GM12878 (cell line): ENCODE measurements at regions of chr12 and their contacts with region 1.

Region 1: GRCh38 chr12:121536899-121537813 is 43.7 kb downstream of the KDM2B start:
- DNase-seq: peak; percentile 82
- ATAC-seq: peak; percentile 81
- H3K4me3 ChIP-seq: peak overlapping the region; percentile 78
- H3K27ac ChIP-seq: peak overlapping the region; percentile 95
- H3K4me1 ChIP-seq: peaks cover 27% of the 10 kb centered on the region
- H3K27me3 ChIP-seq: no peaks in the 10 kb centered on the region
- CTCF ChIP-seq: no peak
- EP300 ChIP-seq: peak in 1 of 2 experiments; percentile 42; a peak in 2 of 4 replicates
- POLR2A ChIP-seq: peak; percentile 91
- RAD21 ChIP-seq: no peak

Region 2: GRCh38 chr12:121443193-121443870 is 93.8 kb before region 1 on chr12:
- CTCF ChIA-PET with region 1: no interaction called
- POLR2A ChIA-PET with region 1: no interaction called
- RAD21 ChIA-PET with region 1: no interaction called
- SMC1A ChIA-PET with region 1: no interaction called
- in situ Hi-C with region 1: no loop called
- intact Hi-C with region 1: no loop called
- DNase-seq: no peak
- ATAC-seq: peak; percentile 95
- H3K4me3 ChIP-seq: no peak overlapping the region
- H3K27ac ChIP-seq: no peak overlapping the region
- H3K4me1 ChIP-seq: no peaks in the 10 kb centered on the region
- H3K27me3 ChIP-seq: no peaks in the 10 kb centered on the region
- CTCF ChIP-seq: peak; percentile 76 to 92 (median 84)
- EP300 ChIP-seq: no peak
- POLR2A ChIP-seq: no peak
- RAD21 ChIP-seq: peak; percentile 76

Region 3: GRCh38 chr12:121499929-121500793 is 37.0 kb before region 1 on chr12:
- CTCF ChIA-PET with region 1: interaction called, 9 read pairs
- POLR2A ChIA-PET with region 1: interaction called, 7 read pairs
- RAD21 ChIA-PET with region 1: interaction called, 5 read pairs
- SMC1A ChIA-PET with region 1: interaction called, 5 read pairs
- in situ Hi-C with region 1: no loop called
- intact Hi-C with region 1: loop called (anchors 5 kb)
- DNase-seq: no peak
- ATAC-seq: peak; percentile 94
- H3K4me3 ChIP-seq: no peak overlapping the region
- H3K27ac ChIP-seq: no peak overlapping the region
- H3K4me1 ChIP-seq: no peaks in the 10 kb centered on the region
- H3K27me3 ChIP-seq: no peaks in the 10 kb centered on the region
- CTCF ChIP-seq: peak; percentile 85 to 96 (median 91)
- EP300 ChIP-seq: no peak
- POLR2A ChIP-seq: no peak
- RAD21 ChIP-seq: peak; percentile 92

Region 4: GRCh38 chr12:121513464-121514183 is 23.5 kb before region 1 on chr12:
- CTCF ChIA-PET with region 1: interaction called, 3 read pairs
- POLR2A ChIA-PET with region 1: interaction called, 5 read pairs
- RAD21 ChIA-PET with region 1: interaction called, 9 read pairs
- SMC1A ChIA-PET with region 1: interaction called, 11 read pairs
- in situ Hi-C with region 1: no loop called
- intact Hi-C with region 1: no loop called
- DNase-seq: no peak
- ATAC-seq: peak; percentile 97
- H3K4me3 ChIP-seq: no peak overlapping the region
- H3K27ac ChIP-seq: peak overlapping the region; percentile 36
- H3K4me1 ChIP-seq: peaks cover 11% of the 10 kb centered on the region
- H3K27me3 ChIP-seq: no peaks in the 10 kb centered on the region
- CTCF ChIP-seq: no peak
- EP300 ChIP-seq: no peak
- POLR2A ChIP-seq: no peak
- RAD21 ChIP-seq: no peak

Region 5: DNA sequence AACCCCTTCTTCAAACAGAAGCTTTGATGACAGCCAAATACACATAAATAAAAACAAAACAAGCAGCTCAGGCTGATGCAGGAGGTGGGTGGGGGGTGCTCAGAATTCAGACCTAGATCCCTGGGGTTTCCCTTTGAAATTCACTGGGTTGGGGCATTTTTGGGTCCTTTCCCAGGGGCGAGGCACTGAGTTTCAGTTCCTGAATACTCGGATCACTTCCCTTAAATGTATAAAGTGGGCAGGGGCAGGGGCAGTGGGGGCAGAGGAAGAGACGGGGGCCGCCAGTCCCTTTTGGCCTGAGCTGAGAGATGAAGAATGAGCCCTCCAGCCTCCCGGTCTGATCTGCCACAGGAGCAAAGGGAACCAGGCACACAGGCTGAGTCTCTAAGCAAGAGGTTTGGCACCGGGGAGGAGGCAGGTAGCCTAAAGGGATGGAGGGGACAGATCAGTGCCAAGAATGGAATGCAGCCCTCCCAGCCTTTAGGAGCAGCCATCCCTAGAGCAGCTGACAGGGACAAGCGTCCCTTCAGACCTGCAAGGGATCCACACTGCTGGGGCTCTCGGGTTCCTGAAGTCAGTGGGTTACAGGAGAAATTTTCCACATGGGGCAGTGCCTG is 23.3 kb after region 1 on chr12:
- CTCF ChIA-PET with region 1: no interaction called
- POLR2A ChIA-PET with region 1: interaction called, 3 read pairs
- RAD21 ChIA-PET with region 1: interaction called, 13 read pairs
- SMC1A ChIA-PET with region 1: no interaction called
- in situ Hi-C with region 1: no loop called
- intact Hi-C with region 1: no loop called
- DNase-seq: peak; percentile 63
- ATAC-seq: peak; percentile 89
- H3K4me3 ChIP-seq: no peak overlapping the region
- H3K27ac ChIP-seq: peak overlapping the region; percentile 65
- H3K4me1 ChIP-seq: peaks cover 31% of the 10 kb centered on the region
- H3K27me3 ChIP-seq: no peaks in the 10 kb centered on the region
- CTCF ChIP-seq: no peak
- EP300 ChIP-seq: peak; percentile 79 to 89; a peak in 3 of 4 replicates
- POLR2A ChIP-seq: no peak
- RAD21 ChIP-seq: no peak

Region 6: DNA sequence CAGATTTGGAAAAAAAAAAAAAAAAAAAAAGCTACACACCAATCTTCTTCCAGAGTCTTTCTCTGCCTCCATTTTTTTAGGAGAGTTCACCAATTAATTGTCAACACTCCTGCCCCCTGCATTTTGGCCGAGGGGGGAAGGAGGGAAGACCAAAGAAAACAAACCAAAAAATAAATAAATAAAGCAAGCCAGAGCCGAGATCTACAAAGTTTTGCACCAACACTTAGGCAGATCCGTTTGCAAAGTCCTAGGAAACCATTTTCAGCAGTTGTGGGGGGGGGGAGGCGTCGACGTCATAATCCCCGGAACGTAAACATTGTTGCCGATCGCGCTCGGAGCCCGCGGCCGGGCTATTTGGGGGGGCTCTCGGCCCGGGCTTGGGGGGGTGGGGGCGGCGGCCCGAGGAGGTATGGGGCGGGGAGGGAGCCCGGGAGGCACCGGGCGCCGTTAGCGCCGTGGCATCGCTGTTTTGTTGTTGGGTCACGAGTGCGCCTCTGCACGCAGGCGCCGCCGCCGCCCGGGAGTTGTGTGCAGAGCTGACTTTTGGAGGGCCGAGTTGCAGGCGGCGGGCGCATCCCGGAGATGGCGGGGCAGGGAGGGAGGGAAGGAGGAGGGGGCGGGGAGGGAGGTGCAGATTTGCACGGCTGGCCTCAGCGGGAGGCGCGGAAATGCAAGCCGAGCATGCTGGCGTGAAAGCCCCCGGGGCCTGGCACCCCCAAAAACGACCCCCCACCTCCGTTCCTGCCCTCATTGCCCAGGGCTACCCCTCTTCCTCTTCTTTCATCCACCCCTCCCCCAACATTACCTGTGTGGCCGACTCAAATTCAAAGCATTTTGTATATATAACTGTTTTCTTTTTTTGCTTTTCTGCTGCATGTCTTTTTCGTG is 43.1 kb after region 1 on chr12:
- CTCF ChIA-PET with region 1: interaction called, 6 read pairs
- POLR2A ChIA-PET with region 1: interaction called, 87 read pairs
- RAD21 ChIA-PET with region 1: interaction called, 13 read pairs
- SMC1A ChIA-PET with region 1: interaction called, 40 read pairs
- in situ Hi-C with region 1: no loop called
- intact Hi-C with region 1: no loop called
- DNase-seq: no peak
- ATAC-seq: peak; percentile 67
- H3K4me3 ChIP-seq: peak overlapping the region; percentile 77
- H3K27ac ChIP-seq: peak overlapping the region; percentile 59
- H3K4me1 ChIP-seq: peaks cover 19% of the 10 kb centered on the region
- H3K27me3 ChIP-seq: no peaks in the 10 kb centered on the region
- CTCF ChIP-seq: no peak
- EP300 ChIP-seq: no peak
- POLR2A ChIP-seq: peak; percentile 69
- RAD21 ChIP-seq: no peak

Region 7: DNA sequence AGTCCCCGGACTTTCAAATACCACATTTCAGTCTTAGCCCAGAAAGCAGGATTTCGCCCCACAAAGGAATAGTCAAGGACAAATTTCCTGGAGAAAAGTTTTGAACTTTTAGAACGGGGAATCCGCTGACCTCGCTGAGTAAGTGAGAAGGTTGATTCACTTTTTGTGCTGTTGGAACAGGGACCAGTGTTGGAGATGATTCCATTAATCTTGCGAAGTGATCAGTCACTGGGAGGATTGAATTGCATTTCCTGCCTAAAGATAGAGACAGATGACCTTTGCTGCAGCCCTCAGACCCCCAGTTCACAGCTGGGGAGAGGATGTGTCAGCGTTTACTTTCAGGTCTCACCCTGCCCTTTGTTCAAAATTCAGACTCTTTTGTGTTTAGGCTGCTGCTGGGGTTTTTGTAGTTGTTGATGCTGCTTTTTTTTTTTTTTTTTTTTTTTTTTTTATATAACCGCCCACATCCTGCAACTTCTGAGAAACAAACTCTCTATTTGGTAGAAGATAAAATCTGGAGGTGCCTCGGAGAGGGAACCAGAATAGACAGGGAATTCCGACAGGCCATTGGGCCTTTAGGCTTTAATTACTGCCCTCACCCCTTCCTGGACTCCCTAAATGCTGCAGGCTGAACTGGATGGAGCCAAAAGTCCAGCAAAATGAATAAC is 53.5 kb after region 1 on chr12:
- CTCF ChIA-PET with region 1: interaction called, 4 read pairs
- POLR2A ChIA-PET with region 1: interaction called, 5 read pairs
- RAD21 ChIA-PET with region 1: interaction called, 3 read pairs
- SMC1A ChIA-PET with region 1: interaction called, 3 read pairs
- in situ Hi-C with region 1: no loop called
- intact Hi-C with region 1: loop called (anchors 2 kb)
- DNase-seq: peak; percentile 74
- ATAC-seq: peak; percentile 91
- H3K4me3 ChIP-seq: peak overlapping the region; percentile 61
- H3K27ac ChIP-seq: peak overlapping the region; percentile 82
- H3K4me1 ChIP-seq: peaks cover 10% of the 10 kb centered on the region
- H3K27me3 ChIP-seq: no peaks in the 10 kb centered on the region
- CTCF ChIP-seq: no peak
- EP300 ChIP-seq: peak in 1 of 2 experiments; percentile 62; a peak in 1 of 4 replicates
- POLR2A ChIP-seq: peak; percentile 63
- RAD21 ChIP-seq: no peak

Region 8: DNA sequence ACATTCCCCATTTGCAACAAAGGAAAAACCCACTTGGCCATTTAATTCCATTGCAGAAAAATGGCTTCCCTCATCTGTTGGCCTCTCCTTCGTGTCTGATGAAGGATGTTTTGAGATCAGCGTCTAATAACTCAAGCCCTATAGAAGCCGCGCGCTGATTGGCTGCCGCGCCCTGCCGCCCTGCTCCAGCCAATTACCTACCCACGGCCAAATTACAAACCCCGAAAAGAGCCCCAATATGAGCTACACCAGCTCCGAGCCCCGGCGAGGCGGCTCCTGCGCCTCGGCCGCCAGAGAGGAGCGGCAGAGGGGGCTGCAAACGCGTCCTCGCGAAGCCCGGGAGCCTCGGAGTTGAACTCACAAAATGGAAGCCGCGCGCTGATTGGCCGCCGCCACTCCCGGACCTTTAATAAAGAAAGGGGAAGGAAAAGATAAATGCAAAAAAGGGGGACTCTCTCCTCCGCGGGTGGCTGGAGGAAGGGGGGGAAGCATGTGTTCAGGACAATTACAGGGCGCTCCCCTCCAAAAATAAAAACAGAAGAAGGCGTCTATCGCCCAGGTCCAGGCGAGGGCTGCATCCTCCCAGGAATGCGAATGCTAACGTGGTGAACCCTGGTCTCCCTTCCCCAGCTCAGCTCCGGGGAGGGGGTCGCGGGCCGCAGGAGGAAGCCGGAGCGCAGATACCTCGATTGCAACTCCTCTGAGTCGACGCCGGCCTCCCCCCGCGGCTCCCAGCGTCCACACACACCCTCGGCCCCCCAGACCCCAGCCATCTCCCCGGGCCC is 265.9 kb after region 1 on chr12:
- CTCF ChIA-PET with region 1: no interaction called
- POLR2A ChIA-PET with region 1: interaction called, 5 read pairs
- RAD21 ChIA-PET with region 1: no interaction called
- SMC1A ChIA-PET with region 1: no interaction called
- in situ Hi-C with region 1: no loop called
- intact Hi-C with region 1: loop called (anchors 5 kb)
- DNase-seq: peak; percentile 88
- ATAC-seq: peak; percentile 66
- H3K4me3 ChIP-seq: peak overlapping the region; percentile 66
- H3K27ac ChIP-seq: peak overlapping the region; percentile 97
- H3K4me1 ChIP-seq: peaks cover 27% of the 10 kb centered on the region
- H3K27me3 ChIP-seq: no peaks in the 10 kb centered on the region
- CTCF ChIP-seq: no peak
- EP300 ChIP-seq: no peak
- POLR2A ChIP-seq: peak; percentile 89
- RAD21 ChIP-seq: no peak